Activated T-helper 1 cell treated with anti-CD3 and anti-CD28 coated beads, Interleukin-12 subunit alpha, Interleukin-12 subunit beta, Interleukin-2, Interleukin-4 antibody, amounts not matched to agents 30 ng/mL and 10 ng/mL and 1 ng/mL, durations not matched to agents 14 hours and 24 hours and 36 hours (primary cell): ENCODE measurements at regions of chr10 and their contacts with region 1.

Region 1: DNA sequence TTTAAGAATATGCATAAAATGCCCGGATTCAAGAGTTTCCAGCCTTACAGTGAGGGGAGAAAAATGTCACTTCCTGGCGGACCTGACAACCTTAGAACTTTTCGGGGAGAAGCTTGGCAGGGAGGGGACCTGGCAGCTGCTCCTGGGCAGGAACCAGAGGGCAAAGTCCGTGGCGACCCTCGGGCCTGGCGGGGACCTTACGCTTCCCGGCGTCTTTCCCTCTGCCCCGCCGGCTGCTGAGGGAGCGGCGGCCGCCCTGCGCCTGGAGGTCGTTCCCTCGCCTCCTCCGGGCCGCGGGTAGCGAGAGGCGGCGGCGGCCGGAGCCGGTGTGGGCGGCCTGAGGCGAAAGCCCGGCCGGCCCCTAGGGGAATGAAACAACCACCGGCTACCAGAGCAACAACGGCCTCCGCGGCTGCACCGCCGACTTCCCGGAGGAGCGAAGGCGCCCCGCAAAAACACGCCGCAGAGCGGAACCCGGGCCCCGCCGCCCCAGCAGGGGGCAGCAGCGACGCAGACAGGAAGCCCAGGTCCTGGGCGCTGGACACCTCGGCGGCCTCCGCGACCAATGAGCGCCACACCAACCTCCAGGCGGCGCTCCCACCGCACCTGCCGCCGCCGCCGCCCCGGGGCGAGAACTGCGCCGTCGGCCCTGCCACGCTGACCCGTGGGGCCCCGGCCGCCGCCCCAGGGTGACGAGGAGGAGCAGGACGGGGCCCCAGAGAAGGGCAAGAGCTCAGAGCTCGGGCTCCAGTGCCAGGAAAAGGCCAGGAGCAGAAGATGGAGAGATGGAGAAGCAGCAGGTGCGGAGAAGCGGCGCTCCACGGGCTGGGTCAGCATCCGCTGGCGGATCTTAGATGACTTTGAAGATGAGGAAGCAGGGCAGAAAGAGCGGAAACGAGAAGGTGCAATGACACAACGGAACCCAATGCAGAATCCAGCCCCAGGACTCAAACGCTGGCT is 10.5 kb upstream of the ACSM6 start:
- DNase-seq: peak; percentile 74
- H3K4me3 Mint-ChIP-seq: peak overlapping the region; percentile 80
- H3K27ac Mint-ChIP-seq: peak overlapping the region; percentile 78
- H3K4me1 Mint-ChIP-seq: peaks cover 5% of the 10 kb centered on the region
- H3K27me3 Mint-ChIP-seq: peaks cover 33% of the 10 kb centered on the region

Region 2: GRCh38 chr10:95133016-95133752 is 50.4 kb before region 1 on chr10:
- intact Hi-C with region 1: loop called (anchors 1 kb)
- DNase-seq: peak; percentile 60
- H3K4me3 Mint-ChIP-seq: no peak overlapping the region
- H3K27ac Mint-ChIP-seq: no peak overlapping the region
- H3K4me1 Mint-ChIP-seq: no peaks in the 10 kb centered on the region
- H3K27me3 Mint-ChIP-seq: peaks cover 4% of the 10 kb centered on the region

Region 3: GRCh38 chr10:95236068-95236903 is 52.7 kb after region 1 on chr10:
- intact Hi-C with region 1: loop called (anchors 1 kb)
- DNase-seq: no peak
- H3K4me3 Mint-ChIP-seq: peak overlapping the region; percentile 46
- H3K27ac Mint-ChIP-seq: peak overlapping the region; percentile 89
- H3K4me1 Mint-ChIP-seq: peaks cover 26% of the 10 kb centered on the region
- H3K27me3 Mint-ChIP-seq: peaks cover 3% of the 10 kb centered on the region

Region 4: GRCh38 chr10:95290461-95291364 is 107.2 kb after region 1 on chr10 and contains the start of gene PDLIM1:
- intact Hi-C with region 1: loop called (anchors 2 kb)
- DNase-seq: peak; percentile 51
- H3K4me3 Mint-ChIP-seq: peak within 1 kb of the TSS; percentile 81
- H3K27ac Mint-ChIP-seq: peak within 1 kb of the TSS; percentile 51
- H3K4me1 Mint-ChIP-seq: peaks cover 32% of the 10 kb centered on the region
- H3K27me3 Mint-ChIP-seq: peaks cover 43% of the 10 kb centered on the region
- total RNA-seq, gene PDLIM1: 2.6 and 2.9 TPM in 2 replicates